AG04450 (cell line): ENCODE measurements at regions of chr22 and their contacts with region 1.

Region 1: GRCh38 chr22:43884600-43885325 is 7.0 kb downstream of the PNPLA5 start:
- DNase-seq: no peak
- H3K4me3 ChIP-seq: no peak overlapping the region
- H3K27ac ChIP-seq: no peak overlapping the region
- H3K27me3 ChIP-seq: peaks cover 15% of the 10 kb centered on the region
- CTCF ChIP-seq: peak; percentile 88

Region 2: GRCh38 chr22:43897751-43898261 is 13.0 kb after region 1 on chr22:
- CTCF ChIA-PET with region 1: interaction called, 20 read pairs
- POLR2A ChIA-PET with region 1: no interaction called
- DNase-seq: no peak
- H3K4me3 ChIP-seq: no peak overlapping the region
- H3K27ac ChIP-seq: peak overlapping the region; percentile 39
- H3K27me3 ChIP-seq: peaks cover 5% of the 10 kb centered on the region
- CTCF ChIP-seq: no peak